ENCODE measurements at regions of chr3 and their contacts with region 1.

Region 1: GRCh38 chr3:107085261-107085660 is 292.0 kb upstream of the CCDC54 start:
- DNase-seq: no peak
- ATAC-seq: no peak

Region 2: DNA sequence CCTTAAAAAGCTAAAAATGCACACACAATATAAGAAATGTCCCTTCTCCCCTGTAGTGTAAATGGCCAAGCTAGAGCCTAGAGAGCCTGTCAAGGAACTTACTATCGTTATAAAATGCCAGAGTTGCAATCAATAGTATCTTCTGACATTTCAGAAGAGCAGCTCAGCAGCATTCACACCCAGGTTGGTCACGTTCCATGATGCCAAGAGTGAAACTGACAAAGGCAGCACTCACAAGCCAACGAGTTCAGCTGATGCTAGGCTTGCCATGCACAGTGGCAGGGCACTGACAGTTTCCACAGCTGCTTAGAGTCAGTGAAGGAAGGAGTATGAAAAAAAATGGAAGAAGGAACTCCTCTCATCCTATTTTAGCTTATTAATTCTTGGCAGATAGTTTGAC is 39.5 kb before region 1 on chr3:
- intact Hi-C with region 1: loop called (anchors 2 kb)
- DNase-seq: no peak
- ATAC-seq: no peak

Region 3: DNA sequence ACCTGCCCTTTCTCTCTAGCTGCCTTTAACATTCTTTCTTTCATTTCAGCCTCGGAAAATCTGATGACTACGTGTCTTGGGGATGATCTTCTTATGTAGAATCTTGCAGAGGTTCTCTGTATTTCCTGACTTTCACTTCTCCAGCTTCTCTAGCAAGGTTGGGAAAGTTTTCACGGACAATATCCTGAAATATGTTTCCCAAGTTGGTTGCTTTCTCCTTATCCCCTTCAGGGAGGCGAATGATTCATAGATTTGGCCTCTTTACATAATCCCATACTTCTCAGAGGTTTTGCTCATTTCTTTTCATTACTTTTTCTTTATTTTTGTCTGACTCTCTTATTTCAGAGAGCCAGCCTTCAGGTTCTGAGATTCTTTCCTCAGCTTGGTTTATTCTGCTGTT is 229.9 kb after region 1 on chr3:
- intact Hi-C with region 1: no loop called
- DNase-seq: no peak
- ATAC-seq: no peak

Region 4: DNA sequence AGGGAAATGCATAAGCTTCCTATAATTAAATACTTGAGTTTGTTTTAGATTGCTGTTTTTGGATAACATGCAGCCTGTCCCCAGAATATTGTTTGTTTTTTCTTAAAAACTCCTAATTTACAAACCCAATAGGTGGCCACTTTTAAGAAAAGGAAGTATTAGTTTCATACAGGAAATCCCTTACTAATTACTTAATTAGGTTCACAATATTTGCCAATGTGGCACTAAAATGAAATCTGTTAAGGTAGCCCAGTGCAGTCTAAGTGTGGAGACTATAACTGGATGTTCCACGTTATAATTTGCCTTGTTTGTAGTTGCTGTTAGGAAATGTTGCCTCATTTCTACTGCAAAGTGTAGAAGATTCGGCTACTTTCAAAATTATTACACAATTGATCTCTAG is 633.3 kb after region 1 on chr3:
- intact Hi-C with region 1: no loop called
- DNase-seq: no peak
- ATAC-seq: no peak